WTC11 (cell line): ENCODE measurements at regions of chr19 and their contacts with region 1.

Region 1: DNA sequence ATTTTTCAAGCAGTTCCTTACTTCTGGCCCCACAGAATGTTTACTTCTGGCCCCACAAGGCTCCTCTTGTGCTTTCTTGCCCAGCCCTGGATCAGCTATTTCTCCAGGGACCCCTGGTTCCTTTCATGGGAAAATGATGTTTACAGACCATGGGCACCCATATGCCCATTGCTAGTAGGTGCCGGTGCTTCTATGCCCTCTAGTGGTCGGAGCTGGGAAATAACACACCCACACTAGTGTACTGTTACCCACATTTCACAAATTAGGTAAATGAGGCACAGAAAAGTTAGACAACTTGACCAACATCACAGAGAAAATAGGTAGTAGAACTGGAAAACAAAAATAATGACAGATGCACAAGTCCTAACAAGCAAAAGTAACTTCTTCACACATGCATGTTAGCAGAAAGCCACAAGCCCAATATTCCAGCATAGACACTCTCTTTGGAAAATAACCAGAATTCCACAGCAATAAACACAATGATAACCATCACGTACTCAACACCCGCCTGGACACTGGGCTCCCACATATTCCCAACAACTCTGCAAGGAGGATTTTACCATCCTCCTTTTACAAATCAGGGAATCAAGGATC is 1.3 kb upstream of the CEACAM6 start:
- DNase-seq: peak; percentile 79
- ATAC-seq: peak; percentile 81
- H3K4me3 Mint-ChIP-seq: no peak overlapping the region
- H3K27ac Mint-ChIP-seq: peak overlapping the region; percentile 48; the same call in 1 of the 2 replicates
- H3K4me1 Mint-ChIP-seq: peaks cover 2% of the 10 kb centered on the region; the same call in 1 of the 2 replicates
- H3K27me3 Mint-ChIP-seq: peaks cover 6% of the 10 kb centered on the region
- CTCF ChIP-seq: peak; percentile 74

Region 2: GRCh38 chr19:41570639-41571112 is 183.4 kb before region 1 on chr19:
- CTCF ChIA-PET with region 1: interaction called, 10 read pairs
- POLR2A ChIA-PET with region 1: no interaction called
- DNase-seq: peak; percentile 87
- ATAC-seq: peak; percentile 97
- H3K4me3 Mint-ChIP-seq: no peak overlapping the region
- H3K27ac Mint-ChIP-seq: no peak overlapping the region
- H3K4me1 Mint-ChIP-seq: peaks cover 3% of the 10 kb centered on the region
- H3K27me3 Mint-ChIP-seq: peaks cover 87% of the 10 kb centered on the region
- CTCF ChIP-seq: peak; percentile 87

Region 3: DNA sequence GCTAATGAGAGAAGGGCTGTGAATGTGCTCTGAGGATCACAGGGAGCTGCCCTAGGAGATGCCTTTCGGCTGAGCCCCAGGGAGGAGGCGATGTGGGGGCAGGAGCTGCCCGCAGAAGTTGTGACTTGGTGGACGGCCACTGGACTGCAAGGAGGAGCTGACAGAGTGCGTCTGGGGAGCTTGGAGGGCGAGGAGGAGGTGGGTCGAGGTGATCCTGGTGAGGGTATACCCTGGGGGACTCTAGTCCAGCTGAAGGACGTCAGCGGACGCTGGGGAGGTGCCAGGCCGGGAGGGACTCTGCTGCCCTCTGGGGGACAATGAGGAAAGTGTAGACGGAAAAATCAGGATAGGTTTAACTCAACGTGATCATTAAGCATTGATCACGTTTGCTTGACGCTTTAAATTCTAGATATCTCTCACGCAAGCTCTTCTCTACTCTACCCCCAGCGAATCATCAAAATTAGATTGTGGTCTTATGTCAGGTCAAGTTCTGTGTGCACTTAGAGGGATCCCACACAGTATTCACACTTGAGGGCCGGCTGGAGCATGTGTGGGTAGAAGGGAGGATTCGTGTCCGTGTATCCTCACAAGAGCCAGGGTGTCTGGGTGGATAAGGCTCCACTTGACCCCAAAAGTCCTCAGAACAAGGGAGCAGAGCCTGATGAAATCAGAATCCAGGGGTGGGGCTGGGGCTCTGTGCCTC is 62.6 kb before region 1 on chr19:
- CTCF ChIA-PET with region 1: interaction called, 15 read pairs
- POLR2A ChIA-PET with region 1: no interaction called
- DNase-seq: peak; percentile 69
- ATAC-seq: peak; percentile 86
- H3K4me3 Mint-ChIP-seq: no peak overlapping the region; the same call in 1 of the 2 replicates
- H3K27ac Mint-ChIP-seq: no peak overlapping the region
- H3K4me1 Mint-ChIP-seq: peaks cover 2% of the 10 kb centered on the region; the same call in 1 of the 2 replicates
- H3K27me3 Mint-ChIP-seq: peaks cover 39% of the 10 kb centered on the region
- CTCF ChIP-seq: peak; percentile 61

Region 4: GRCh38 chr19:41734617-41735016 is 19.4 kb before region 1 on chr19:
- CTCF ChIA-PET with region 1: interaction called, 25 read pairs
- POLR2A ChIA-PET with region 1: interaction called, 6 read pairs
- DNase-seq: no peak
- ATAC-seq: no peak
- H3K4me3 Mint-ChIP-seq: no peak overlapping the region
- H3K27ac Mint-ChIP-seq: no peak overlapping the region
- H3K4me1 Mint-ChIP-seq: no peaks in the 10 kb centered on the region
- H3K27me3 Mint-ChIP-seq: peaks cover 3% of the 10 kb centered on the region
- CTCF ChIP-seq: no peak

Region 5: GRCh38 chr19:41775360-41775695 is 21.3 kb after region 1 on chr19:
- CTCF ChIA-PET with region 1: interaction called, 55 read pairs
- POLR2A ChIA-PET with region 1: no interaction called
- DNase-seq: no peak
- ATAC-seq: no peak
- H3K4me3 Mint-ChIP-seq: no peak overlapping the region
- H3K27ac Mint-ChIP-seq: no peak overlapping the region
- H3K4me1 Mint-ChIP-seq: peaks cover 17% of the 10 kb centered on the region
- H3K27me3 Mint-ChIP-seq: no peaks in the 10 kb centered on the region; the same call in 1 of the 2 replicates
- CTCF ChIP-seq: no peak

Region 6: GRCh38 chr19:41801792-41802211 is 47.8 kb after region 1 on chr19:
- CTCF ChIA-PET with region 1: interaction called, 13 read pairs
- POLR2A ChIA-PET with region 1: no interaction called
- DNase-seq: no peak
- ATAC-seq: no peak
- H3K4me3 Mint-ChIP-seq: no peak overlapping the region
- H3K27ac Mint-ChIP-seq: no peak overlapping the region
- H3K4me1 Mint-ChIP-seq: peaks cover 7% of the 10 kb centered on the region
- H3K27me3 Mint-ChIP-seq: no peaks in the 10 kb centered on the region; the same call in 1 of the 2 replicates
- CTCF ChIP-seq: no peak

Region 7: GRCh38 chr19:41837981-41838708 is 84.1 kb after region 1 on chr19:
- CTCF ChIA-PET with region 1: interaction called, 20 read pairs
- POLR2A ChIA-PET with region 1: interaction called, 3 read pairs
- DNase-seq: no peak
- ATAC-seq: no peak
- H3K4me3 Mint-ChIP-seq: no peak overlapping the region
- H3K27ac Mint-ChIP-seq: no peak overlapping the region
- H3K4me1 Mint-ChIP-seq: no peaks in the 10 kb centered on the region
- H3K27me3 Mint-ChIP-seq: peaks cover 31% of the 10 kb centered on the region
- CTCF ChIP-seq: no peak

Region 8: GRCh38 chr19:41866284-41866683 is 112.3 kb after region 1 on chr19:
- CTCF ChIA-PET with region 1: no interaction called
- POLR2A ChIA-PET with region 1: no interaction called
- DNase-seq: no peak
- ATAC-seq: peak; percentile 4
- H3K4me3 Mint-ChIP-seq: peak overlapping the region; percentile 22
- H3K27ac Mint-ChIP-seq: peak overlapping the region; percentile 82
- H3K4me1 Mint-ChIP-seq: peaks cover 47% of the 10 kb centered on the region
- H3K27me3 Mint-ChIP-seq: no peaks in the 10 kb centered on the region
- CTCF ChIP-seq: no peak